ENCODE measurements at regions of chr1 and their contacts with region 1.

Region 1: DNA sequence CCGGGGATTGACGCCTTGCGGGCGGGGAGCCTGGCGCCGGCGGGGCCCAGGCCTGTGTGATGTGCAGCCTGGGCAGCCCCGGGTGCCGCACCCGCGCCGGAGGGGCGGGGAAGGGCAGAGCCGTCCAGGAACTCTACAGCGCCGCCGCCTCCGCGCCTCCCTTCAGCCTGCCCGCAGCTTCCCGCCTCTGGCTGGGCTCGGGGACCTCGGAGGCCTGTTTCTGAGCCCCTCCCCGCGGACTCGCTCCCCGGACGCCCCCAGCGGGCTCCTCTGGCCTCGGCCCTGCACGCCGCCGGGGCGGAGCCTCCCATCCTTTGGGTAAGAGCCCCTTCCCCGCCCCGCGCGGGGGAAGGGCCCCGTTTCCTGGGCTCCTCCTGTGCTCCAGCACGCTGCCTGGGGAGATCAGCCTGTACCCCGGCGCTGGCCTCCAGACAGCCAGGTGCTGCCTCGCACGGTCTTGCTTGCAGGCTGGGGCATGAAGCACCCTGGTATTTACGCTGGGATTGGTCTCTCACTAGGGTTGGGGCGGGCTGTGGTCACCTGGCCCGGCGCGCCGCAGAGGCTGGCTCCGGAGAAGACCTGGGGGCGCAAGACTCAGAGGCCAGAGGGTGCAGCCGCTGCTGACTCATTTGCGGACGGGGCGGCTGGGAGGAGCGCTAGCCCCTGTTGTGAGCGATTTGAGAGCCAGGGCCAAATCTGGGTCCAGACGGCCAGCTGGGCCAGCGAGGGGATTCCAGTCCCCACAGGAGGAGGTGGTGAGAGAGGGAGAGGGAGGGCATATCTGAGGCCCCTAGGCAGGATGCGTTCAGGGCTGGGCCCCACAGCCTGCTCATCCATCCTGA is 5.7 kb upstream of the ACOT11 start:
- DNase-seq: peak; percentile 89
- H3K4me3 Mint-ChIP-seq: peak overlapping the region; percentile 80
- H3K27ac Mint-ChIP-seq: peak overlapping the region; percentile 18
- H3K4me1 Mint-ChIP-seq: peaks cover 13% of the 10 kb centered on the region
- H3K27me3 Mint-ChIP-seq: peaks cover 11% of the 10 kb centered on the region

Region 2: DNA sequence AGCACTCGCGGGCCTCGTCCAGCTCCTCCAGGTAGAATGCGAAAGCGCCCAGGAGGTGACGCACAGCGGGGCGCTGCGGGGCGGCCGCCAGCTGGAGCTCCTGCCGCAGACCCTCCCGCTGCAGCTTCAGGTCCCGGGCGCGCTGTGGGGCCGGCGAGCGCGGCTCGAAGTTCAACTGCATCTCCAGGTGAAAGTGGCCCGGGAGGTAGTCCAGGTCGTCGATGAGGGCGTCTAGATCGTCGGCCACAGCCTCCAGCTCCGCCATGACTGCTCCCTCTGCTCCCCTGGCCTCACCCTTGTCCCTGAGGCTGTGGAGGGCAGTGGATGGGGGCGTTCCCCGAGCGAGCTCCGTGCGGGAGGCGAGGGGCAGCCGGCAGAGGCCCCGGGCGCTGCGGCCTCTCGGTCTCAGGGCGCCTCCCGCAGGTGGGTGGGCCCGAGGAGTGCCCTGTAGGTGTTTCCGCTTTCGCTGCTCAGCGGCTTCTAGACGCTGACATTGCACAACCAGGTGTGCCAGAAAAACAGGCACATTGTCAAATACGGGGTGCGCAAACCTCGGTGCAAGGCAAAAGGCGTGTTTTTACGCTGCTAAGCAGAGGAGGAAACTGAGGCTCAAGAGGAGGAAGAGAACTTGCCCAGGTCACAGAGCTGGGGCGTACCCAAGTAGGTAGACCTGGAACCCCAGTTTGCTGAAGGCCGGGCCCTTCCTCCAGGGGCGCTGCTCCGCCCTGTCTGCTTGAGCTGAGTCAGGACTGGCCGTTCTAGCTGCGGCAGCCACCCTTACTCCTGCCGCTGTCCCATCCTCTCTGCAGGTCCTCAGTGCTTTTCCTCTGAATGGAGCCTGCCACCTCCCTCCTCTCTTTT is 258.8 kb after region 1 on chr1 and contains the start of gene TTC22:
- intact Hi-C with region 1: loop called (anchors 2 kb)
- DNase-seq: peak; percentile 91
- H3K4me3 Mint-ChIP-seq: peak within 1 kb of the TSS; percentile 87
- H3K27ac Mint-ChIP-seq: peak within 1 kb of the TSS; percentile 81
- H3K4me1 Mint-ChIP-seq: peaks cover 54% of the 10 kb centered on the region
- H3K27me3 Mint-ChIP-seq: no peaks in the 10 kb centered on the region
- total RNA-seq, gene TTC22: 1.6 TPM in 2 replicates